ENCODE measurements at regions of chr5 and their contacts with region 1.

Region 1: DNA sequence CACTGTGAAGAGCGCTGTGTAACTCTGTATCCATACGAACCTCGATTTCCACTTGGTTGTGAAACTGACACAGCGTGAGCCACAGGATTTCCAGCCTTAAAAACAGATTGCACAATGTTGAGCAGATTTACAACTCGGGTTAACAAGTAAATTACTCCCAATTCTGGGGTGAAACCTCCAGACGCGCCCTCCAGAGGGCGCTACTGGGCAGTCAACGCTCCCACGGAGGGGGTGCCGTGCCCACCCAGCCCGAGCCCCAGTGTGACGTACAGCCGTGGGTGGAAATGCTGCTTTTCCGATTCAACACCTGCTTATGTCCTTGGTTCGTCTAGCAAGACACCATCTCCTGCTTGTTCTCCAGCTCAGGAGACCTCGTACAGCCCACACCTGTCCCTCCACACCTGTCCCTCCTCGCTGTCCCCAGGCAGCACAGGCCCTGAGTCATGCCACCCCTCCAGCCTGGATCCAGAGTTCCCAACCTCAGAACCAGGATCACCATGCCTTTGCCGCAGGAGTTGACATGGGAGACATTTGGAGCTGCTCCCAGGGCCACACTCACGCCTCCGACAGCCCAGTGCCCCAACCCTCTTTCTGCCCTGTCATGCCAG is 34.4 kb upstream of the SLC6A3 start:
- H3K4me3 Mint-ChIP-seq: peak overlapping the region; percentile 67
- H3K27ac Mint-ChIP-seq: peak overlapping the region; percentile 92
- H3K4me1 Mint-ChIP-seq: peaks cover 76% of the 10 kb centered on the region
- H3K27me3 Mint-ChIP-seq: no peaks in the 10 kb centered on the region

Region 2: GRCh38 chr5:1516751-1517601 is 37.3 kb after region 1 on chr5:
- intact Hi-C with region 1: loop called (anchors 5 kb)
- H3K4me3 Mint-ChIP-seq: peak overlapping the region; percentile 26
- H3K27ac Mint-ChIP-seq: peak overlapping the region; percentile 57
- H3K4me1 Mint-ChIP-seq: peaks cover 74% of the 10 kb centered on the region
- H3K27me3 Mint-ChIP-seq: no peaks in the 10 kb centered on the region